GM10248 (cell line): ENCODE measurements at regions of chr1 and their contacts with region 1.

Region 1: GRCh38 chr1:2174348-2175054 is 20.1 kb downstream of the FAAP20 start:
- DNase-seq: peak; percentile 82
- CTCF ChIP-seq: peak; percentile 80

Region 2: GRCh38 chr1:2163205-2163604 is 11.3 kb before region 1 on chr1:
- CTCF ChIA-PET with region 1: interaction called, 13 read pairs
- POLR2A ChIA-PET with region 1: no interaction called
- DNase-seq: no peak
- CTCF ChIP-seq: no peak

Region 3: GRCh38 chr1:2189459-2190425 is 15.2 kb after region 1 on chr1:
- CTCF ChIA-PET with region 1: interaction called, 19 read pairs
- POLR2A ChIA-PET with region 1: no interaction called
- DNase-seq: peak; percentile 91
- CTCF ChIP-seq: no peak

Region 4: DNA sequence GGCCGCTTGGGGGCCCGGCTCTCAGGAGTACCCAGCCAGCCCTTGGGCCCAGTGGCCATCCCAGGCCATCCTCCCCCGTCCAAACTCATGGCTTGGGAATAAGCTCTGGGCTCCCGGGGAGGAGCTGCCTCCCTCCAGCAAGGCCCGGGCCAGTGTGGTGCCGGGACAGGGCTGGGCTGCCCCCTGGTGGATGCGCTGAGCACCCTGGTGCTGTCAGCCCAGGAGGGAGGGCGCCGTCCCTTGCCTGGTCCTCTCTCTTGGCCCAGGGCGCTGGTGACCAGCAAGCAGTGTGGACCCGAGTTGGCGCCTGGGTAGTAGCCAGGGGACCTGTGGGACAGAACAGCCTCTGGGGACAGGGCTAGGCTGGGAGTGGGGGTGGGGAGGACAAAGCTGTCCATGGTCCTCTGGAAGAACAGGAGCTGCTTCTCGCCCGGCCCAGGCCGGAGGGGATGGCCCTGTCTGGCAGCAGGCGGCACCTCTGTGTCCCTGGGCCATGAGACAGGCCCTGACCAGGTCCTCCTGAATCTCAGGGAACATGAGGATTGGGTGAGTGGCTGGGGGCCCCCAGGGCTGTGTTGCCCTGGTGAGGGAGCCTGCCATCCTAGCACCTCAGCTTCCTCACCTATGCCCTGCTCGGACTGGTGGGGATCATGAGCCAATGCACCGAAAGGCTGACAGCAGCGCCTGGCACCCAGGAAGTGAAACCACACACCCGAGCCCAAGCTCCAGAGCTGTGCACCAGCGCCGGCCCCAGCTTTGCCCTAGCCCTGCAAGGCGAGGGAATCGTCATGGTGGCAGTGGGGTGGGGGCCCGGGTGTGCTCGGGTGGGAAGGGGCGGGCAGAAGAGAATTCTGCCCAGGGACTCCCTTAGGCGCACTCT is 207.5 kb after region 1 on chr1:
- CTCF ChIA-PET with region 1: interaction called, 11 read pairs
- POLR2A ChIA-PET with region 1: no interaction called
- DNase-seq: peak; percentile 92
- CTCF ChIP-seq: peak; percentile 96